Heart right ventricle (tissue), 16 donors: ENCODE measurements at regions of chr4 and their contacts with region 1.

Region 1: DNA sequence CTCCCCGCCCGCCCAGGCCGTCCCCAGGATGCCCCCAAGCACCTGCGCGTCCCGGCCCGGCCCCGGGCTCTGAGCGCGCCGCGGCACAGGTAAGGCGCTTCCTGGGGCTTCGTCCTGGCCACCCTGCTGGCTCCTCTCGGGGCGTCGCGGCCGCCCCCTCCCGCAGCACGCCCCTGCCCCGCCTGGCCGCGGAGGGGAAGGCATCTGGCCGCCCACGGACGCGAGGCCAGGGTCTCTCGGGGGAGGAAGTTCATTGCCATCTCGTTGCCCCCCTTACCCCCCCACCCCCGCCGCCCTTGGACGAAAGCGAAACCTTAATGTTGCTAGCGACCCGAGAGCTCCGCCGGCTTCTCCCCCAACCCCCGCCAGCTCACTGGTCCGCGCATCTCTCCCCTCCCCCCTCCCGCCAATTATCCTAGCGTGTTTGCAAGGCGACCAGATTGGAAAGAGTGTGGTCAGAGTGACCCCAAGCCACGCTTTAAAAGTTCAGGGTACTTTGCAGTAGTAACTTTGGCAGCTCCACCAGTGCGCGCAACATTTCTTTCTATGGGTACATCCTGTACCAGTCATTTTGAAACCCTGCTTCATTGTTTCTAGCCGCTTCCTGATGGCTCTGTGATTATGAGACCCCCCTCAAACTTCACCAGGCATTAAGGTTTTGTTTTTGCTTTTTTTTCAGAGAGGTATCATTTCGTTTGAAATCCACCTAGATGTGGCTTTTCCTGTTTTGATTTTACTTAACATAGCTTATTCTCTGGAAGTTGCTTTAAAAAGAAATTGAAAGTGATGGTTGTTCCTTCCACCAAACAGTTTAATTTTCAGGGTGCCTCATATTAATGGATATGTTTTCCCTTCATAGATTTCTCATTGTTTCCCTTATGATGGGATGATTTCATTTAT is 626 bp downstream of the TBC1D1 start:
- DNase-seq: peak in 1 of 2 donors; percentile 34
- ATAC-seq: peak; percentile 15 to 38 (median 28)
- H3K4me3 ChIP-seq: peak overlapping the region; percentile 65 to 96 (median 88)
- H3K27ac ChIP-seq: peak overlapping the region; percentile 85 to 95 (median 91)
- H3K4me1 ChIP-seq: peaks cover 0 to 49% (median 22%) of the 10 kb centered on the region in 9 donors
- H3K27me3 ChIP-seq: no peaks in the 10 kb centered on the region
- CTCF ChIP-seq: peak in 2 of 9 donors; percentile 10 to 16

Region 2: DNA sequence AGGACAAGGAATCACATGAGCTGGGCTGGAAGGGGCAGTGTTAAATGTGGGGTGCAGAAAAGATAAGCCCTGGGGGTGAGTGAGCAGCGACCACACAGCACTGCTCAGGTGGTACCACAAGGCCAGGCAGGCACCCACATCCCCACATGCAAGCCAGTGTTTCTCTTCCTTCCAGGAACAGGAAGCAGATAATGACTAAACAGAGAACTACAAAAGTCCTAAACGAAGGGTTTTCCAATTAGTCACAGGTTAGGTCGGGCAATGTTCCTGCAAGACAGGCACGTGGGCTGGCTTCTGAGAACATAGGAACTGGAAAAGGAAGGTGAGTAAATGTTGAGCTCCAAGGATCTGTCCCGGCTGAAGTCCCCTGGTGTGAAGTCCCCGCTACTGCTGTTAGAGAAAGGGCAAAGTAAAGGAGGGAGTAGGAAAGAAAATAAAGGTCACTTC is 224.9 kb before region 1 on chr4:
- intact Hi-C with region 1: loop called in 1 of 10 experiments (anchors 10 kb)
- DNase-seq: peak in 1 of 2 donors; percentile 64
- ATAC-seq: peak; percentile 22 to 89 (median 68)
- H3K4me3 ChIP-seq: no peak overlapping the region
- H3K27ac ChIP-seq: peak overlapping the region; percentile 44 to 92 (median 74)
- H3K4me1 ChIP-seq: peaks cover 24 to 80% (median 64%) of the 10 kb centered on the region in 9 donors
- H3K27me3 ChIP-seq: no peaks in the 10 kb centered on the region
- CTCF ChIP-seq: peak in 3 of 9 donors; percentile 16 to 27 (median 17)

Region 3: GRCh38 chr4:37802068-37802666 is 89.3 kb before region 1 on chr4:
- intact Hi-C with region 1: loop called in 5 of 10 experiments (anchors 5 to 10 kb)
- DNase-seq: peak in 1 of 2 donors; percentile 53
- ATAC-seq: peak; percentile 30 to 89 (median 79)
- H3K4me3 ChIP-seq: no peak overlapping the region
- H3K27ac ChIP-seq: no peak overlapping the region
- H3K4me1 ChIP-seq: peaks cover 0 to 7% (median 0%) of the 10 kb centered on the region in 9 donors
- H3K27me3 ChIP-seq: no peaks in the 10 kb centered on the region
- CTCF ChIP-seq: peak in 8 of 9 donors; percentile 21 to 77 (median 52)

Region 4: GRCh38 chr4:37826295-37827029 is 65.0 kb before region 1 on chr4 and contains the start of gene PGM2:
- intact Hi-C with region 1: loop called in 5 of 10 experiments (anchors 2 to 10 kb)
- DNase-seq: peak; percentile 89 to 91
- ATAC-seq: peak; percentile 95 to 98 (median 97)
- H3K4me3 ChIP-seq: peak within 1 kb of the TSS; percentile 60 to 93 (median 82)
- H3K27ac ChIP-seq: peak within 1 kb of the TSS; percentile 66 to 94 (median 87)
- H3K4me1 ChIP-seq: peaks cover 4 to 48% (median 28%) of the 10 kb centered on the region in 9 donors
- H3K27me3 ChIP-seq: no peaks in the 10 kb centered on the region
- CTCF ChIP-seq: peak in 3 of 9 donors; percentile 13 to 38 (median 27)
- total RNA-seq, gene PGM2: 5.9 to 16.4 (median 9.9) TPM

Region 5: DNA sequence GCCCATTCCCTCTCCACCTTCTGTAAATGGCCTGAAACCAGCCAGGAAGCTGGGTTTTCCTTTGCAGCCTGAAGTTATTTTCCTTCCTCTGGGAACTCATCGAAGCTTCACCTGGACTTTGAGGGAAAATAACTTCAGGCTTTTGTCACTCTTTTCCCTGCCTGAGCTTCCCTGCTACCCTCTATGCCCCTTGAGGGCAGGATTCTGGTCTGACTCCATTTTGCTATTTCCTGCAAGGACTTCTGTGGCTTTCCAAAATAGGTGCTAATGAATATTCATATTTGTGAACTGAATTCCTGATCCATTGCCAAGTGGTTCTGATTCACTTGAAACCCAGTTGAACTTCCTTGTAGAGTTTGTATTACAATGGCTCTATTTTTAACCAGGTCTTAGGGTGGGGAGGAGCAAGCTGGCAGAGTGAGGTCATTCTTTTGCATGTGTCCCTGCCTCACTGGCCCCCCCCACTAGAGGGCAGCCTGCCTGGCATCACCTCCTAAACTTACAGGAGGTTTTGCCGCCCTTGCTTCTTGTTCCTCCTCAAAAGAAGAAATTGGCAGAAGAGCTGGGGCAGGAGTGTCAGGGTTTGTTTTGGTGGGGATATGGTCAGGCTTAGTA is 79.1 kb after region 1 on chr4:
- intact Hi-C with region 1: loop called in 7 of 10 experiments (anchors 5 to 10 kb)
- DNase-seq: peak; percentile 72 to 80
- ATAC-seq: peak; percentile 85 to 97 (median 93)
- H3K4me3 ChIP-seq: no peak overlapping the region
- H3K27ac ChIP-seq: peak overlapping the region in 9 of 10 donors; percentile 56 to 79 (median 68)
- H3K4me1 ChIP-seq: peaks cover 5 to 53% (median 24%) of the 10 kb centered on the region in 9 donors
- H3K27me3 ChIP-seq: no peaks in the 10 kb centered on the region
- CTCF ChIP-seq: peak; percentile 41 to 79 (median 65)

Region 6: GRCh38 chr4:38034986-38035882 is 143.7 kb after region 1 on chr4:
- intact Hi-C with region 1: loop called in 8 of 10 experiments (anchors 2 to 10 kb)
- DNase-seq: peak in 1 of 2 donors; percentile 77
- ATAC-seq: peak in 5 of 8 donors; percentile 47 to 86 (median 70)
- H3K4me3 ChIP-seq: no peak overlapping the region
- H3K27ac ChIP-seq: peak overlapping the region in 1 of 10 donors; percentile 26
- H3K4me1 ChIP-seq: peaks cover 0 to 8% (median 0%) of the 10 kb centered on the region in 9 donors
- H3K27me3 ChIP-seq: no peaks in the 10 kb centered on the region
- CTCF ChIP-seq: peak; percentile 55 to 81 (median 72)